CD4-positive, alpha-beta memory T cell (primary cell): ENCODE measurements at regions of chr3 and their contacts with region 1.

Region 1: GRCh38 chr3:3134750-3135448 is 8.2 kb downstream of the TRNT1 start:
- DNase-seq: no peak
- H3K4me3 ChIP-seq: no peak overlapping the region
- H3K4me3 Mint-ChIP-seq: peak overlapping the region in 4 of 8 donors; percentile 7 to 35 (median 18)
- H3K27ac ChIP-seq: no peak overlapping the region
- H3K27ac Mint-ChIP-seq: peak overlapping the region; percentile 56 to 87 (median 76)
- H3K4me1 ChIP-seq: peaks cover 41% of the 10 kb centered on the region
- H3K4me1 Mint-ChIP-seq: peaks cover 39 to 64% (median 51%) of the 10 kb centered on the region in 4 donors
- H3K27me3 ChIP-seq: no peaks in the 10 kb centered on the region
- H3K27me3 Mint-ChIP-seq: no peaks in the 10 kb centered on the region

Region 2: GRCh38 chr3:3154879-3155610 is 20.1 kb after region 1 on chr3:
- CTCF ChIA-PET with region 1: no interaction called
- POLR2A ChIA-PET with region 1: no interaction called
- intact Hi-C with region 1: loop called (anchors 2 kb)
- DNase-seq: no peak
- H3K4me3 ChIP-seq: no peak overlapping the region
- H3K4me3 Mint-ChIP-seq: no peak overlapping the region
- H3K27ac ChIP-seq: peak overlapping the region; percentile 22
- H3K27ac Mint-ChIP-seq: peak overlapping the region in 6 of 7 donors; percentile 39 to 87 (median 76)
- H3K4me1 ChIP-seq: peaks cover 19% of the 10 kb centered on the region
- H3K4me1 Mint-ChIP-seq: peaks cover 33 to 66% (median 46%) of the 10 kb centered on the region in 4 donors
- H3K27me3 ChIP-seq: no peaks in the 10 kb centered on the region
- H3K27me3 Mint-ChIP-seq: no peaks in the 10 kb centered on the region